ENCODE measurements at regions of chr9 and their contacts with region 1.

Region 1: DNA sequence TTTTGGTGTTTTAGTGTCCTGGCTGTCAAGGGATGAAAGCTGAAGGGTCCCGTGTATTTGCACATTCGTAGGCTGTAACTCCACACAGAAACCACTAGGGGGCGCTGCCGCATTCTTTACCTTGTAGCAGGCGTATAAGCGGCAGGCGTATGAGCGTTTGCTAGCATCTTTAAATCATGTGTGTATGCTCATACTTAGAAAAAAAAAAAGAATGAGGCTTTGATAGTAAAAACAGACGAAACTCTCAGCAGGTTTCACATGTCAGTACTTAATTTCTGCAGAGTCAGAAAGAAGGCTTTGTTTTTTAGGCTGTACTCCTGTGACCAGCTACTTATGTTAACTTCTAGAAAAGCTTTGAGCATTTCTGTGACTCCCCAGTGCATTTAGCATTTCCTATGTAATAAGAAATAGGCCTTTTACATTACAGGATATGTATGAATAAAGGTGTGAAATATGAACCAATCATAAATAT is 218.8 kb upstream of the ADAMTSL1 start:
- DNase-seq: peak; percentile 61 to 85
- H3K4me3 ChIP-seq: no peak overlapping the region
- H3K27ac ChIP-seq: no peak overlapping the region
- H3K4me1 ChIP-seq: peaks cover 0 to 3% (median 0%) of the 10 kb centered on the region in 4 donors
- H3K27me3 ChIP-seq: no peaks in the 10 kb centered on the region
- CTCF ChIP-seq: peak; percentile 89 to 90

Region 2: GRCh38 chr9:17739736-17740135 is 515.5 kb before region 1 on chr9:
- intact Hi-C with region 1: no loop called
- DNase-seq: no peak
- H3K4me3 ChIP-seq: no peak overlapping the region
- H3K27ac ChIP-seq: no peak overlapping the region
- H3K4me1 ChIP-seq: no peaks in the 10 kb centered on the region
- H3K27me3 ChIP-seq: no peaks in the 10 kb centered on the region
- CTCF ChIP-seq: no peak

Region 3: GRCh38 chr9:18442629-18443491 is 187.7 kb after region 1 on chr9:
- intact Hi-C with region 1: loop called (anchors 5 kb)
- DNase-seq: peak; percentile 62 to 78
- H3K4me3 ChIP-seq: no peak overlapping the region
- H3K27ac ChIP-seq: no peak overlapping the region
- H3K4me1 ChIP-seq: peaks cover 0 to 18% (median 7%) of the 10 kb centered on the region in 4 donors
- H3K27me3 ChIP-seq: no peaks in the 10 kb centered on the region
- CTCF ChIP-seq: peak; percentile 70 to 81

Region 4: DNA sequence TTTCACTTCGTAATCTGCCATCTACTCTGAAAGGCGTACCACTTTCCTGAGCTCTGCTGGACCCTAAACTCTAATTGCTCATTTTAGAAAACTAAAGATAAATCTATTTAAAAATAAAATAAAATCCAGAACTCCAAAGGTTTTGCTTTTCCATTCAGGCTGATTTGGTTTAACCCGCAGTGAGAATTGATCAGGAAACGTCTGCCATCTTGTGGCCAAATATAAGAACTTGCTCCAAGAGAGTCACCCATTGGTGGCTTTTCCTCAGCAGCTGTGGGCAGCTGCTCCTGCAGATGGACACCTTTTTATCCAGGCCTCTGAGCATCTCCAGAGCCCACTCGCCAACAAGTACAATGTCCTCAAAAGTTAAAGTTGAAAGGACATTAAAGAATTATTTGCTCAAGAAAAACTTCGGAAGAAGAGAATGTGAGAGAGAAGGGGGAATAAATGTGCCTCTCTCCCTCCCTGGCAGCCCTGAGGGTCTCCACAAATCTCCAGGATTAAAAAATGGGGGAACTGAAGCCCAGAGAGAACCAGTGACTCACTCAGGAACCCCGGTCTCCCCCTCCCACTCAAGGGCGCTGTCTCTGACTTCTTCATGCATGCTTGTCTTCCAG is 773.7 kb after region 1 on chr9:
- intact Hi-C with region 1: loop called (anchors 5 kb)
- DNase-seq: no peak
- H3K4me3 ChIP-seq: no peak overlapping the region
- H3K27ac ChIP-seq: no peak overlapping the region
- H3K4me1 ChIP-seq: no peaks in the 10 kb centered on the region
- H3K27me3 ChIP-seq: peaks cover 0 to 7% of the 10 kb centered on the region in 2 donors
- CTCF ChIP-seq: peak; percentile 71 to 75

Region 5: DNA sequence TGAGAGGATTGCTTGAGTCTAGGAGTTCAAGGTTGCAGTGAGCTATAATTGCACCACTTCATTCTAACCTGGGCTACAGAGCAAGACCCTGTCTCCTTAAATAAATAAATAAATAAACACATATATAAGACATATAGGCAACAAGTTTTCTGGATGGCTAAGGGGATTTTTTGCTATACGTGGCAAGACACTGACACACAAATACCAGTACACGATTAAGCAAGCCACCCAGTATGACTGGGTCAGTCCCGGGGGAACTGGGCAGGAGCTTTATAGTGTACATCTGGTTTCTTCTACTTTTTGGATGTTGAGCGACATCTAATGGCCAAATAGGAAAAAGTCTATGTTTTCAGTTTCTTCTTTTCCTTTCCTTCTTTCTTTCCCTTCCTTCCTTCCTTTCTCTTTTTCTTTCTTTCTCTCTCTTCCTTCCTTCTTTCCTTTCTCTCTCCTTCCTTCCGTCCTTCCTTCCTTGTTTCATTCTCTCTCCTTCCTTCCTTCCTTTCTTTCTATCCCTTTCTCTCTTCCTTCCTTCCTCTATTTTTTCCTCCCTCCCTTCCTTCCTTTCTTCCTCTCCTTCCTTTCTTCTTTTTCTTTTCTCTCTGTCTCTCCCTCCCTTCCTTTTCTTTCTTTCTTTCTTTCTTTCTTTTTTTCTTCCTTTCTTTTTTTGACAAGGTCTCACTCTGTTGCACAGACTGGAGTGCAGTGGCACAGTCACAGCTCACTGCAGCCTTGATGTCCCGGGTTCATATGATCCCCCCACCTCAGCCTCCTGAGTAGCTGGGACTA is 919.1 kb after region 1 on chr9:
- intact Hi-C with region 1: loop called (anchors 5 kb)
- DNase-seq: peak; percentile 87 to 90
- H3K4me3 ChIP-seq: no peak overlapping the region
- H3K27ac ChIP-seq: no peak overlapping the region
- H3K4me1 ChIP-seq: peaks cover 0 to 6% (median 0%) of the 10 kb centered on the region in 4 donors
- H3K27me3 ChIP-seq: no peaks in the 10 kb centered on the region
- CTCF ChIP-seq: peak; percentile 51